MCF 10A (cell line): ENCODE measurements at regions of chr19 and their contacts with region 1.

Region 1: DNA sequence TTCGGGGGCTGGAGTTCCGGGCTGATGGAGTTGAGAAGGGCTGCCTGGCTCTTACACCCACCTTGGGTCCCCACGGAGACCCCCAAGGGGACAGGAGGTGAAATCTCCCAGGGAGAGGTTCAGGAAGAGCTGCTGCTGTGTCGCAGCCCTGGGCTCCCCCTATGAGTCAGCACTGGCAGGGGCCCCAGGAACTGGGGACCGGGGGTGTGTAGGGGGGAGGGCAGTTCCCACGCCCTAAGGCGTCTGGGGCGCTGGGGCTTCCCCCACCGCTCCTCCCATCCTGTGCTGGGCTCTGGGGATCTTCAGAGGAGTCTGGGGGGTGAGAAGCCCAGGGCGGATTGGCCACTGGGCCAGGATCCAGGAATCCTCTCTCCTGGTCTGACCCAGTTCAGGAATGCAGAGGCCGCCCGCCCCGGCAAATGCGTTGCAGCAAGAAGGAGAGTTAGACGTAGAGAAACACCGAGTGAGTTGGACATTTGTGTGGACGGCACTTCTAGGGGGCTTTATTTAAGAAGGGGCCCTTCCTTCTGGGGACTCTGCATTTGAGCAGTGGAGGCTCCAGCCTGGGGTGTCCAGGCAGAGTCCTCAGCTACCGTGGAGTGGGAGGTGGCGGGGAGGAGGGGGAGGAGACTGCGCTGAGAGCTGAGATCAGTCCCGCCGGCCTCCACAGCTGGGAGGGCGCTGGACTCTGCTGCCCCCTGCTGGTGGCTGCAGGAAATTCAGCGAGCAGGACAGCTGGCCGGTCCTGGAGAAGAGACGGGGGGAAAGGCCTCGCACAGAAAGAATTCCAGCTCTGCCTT is 15.0 kb upstream of the NANOS3 start:
- DNase-seq: peak; percentile 90
- H3K4me3 Mint-ChIP-seq: peak overlapping the region; percentile 75
- H3K27ac Mint-ChIP-seq: peak overlapping the region; percentile 49
- H3K4me1 Mint-ChIP-seq: peaks cover 22% of the 10 kb centered on the region
- H3K27me3 Mint-ChIP-seq: peaks cover 23% of the 10 kb centered on the region
- CTCF ChIP-seq: peak; percentile 91

Region 2: DNA sequence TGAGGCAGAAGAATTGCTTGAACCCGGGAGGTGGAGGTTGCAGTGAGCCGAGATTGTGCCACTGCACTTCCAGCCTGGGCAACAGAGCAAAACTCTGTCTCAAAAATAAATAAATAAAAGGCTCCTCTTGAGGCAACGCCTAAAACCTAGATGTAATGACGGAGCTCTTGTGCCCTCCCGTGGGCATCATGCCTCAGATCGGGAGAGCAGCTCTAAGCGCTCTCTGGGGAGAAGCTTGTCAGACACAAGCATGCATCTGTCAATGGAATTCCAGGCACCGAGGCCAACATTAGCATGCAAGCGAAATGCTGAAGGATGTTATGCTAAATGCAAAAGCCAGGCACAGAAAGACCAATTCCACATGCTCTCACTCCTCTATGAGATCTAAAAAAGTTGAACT is 143.2 kb before region 1 on chr19:
- CTCF ChIA-PET with region 1: interaction called, 3 read pairs
- POLR2A ChIA-PET with region 1: no interaction called
- intact Hi-C with region 1: loop called (anchors 5 kb)
- DNase-seq: peak; percentile 52
- H3K4me3 Mint-ChIP-seq: no peak overlapping the region
- H3K27ac Mint-ChIP-seq: no peak overlapping the region
- H3K4me1 Mint-ChIP-seq: no peaks in the 10 kb centered on the region
- H3K27me3 Mint-ChIP-seq: no peaks in the 10 kb centered on the region
- CTCF ChIP-seq: peak; percentile 59

Region 3: DNA sequence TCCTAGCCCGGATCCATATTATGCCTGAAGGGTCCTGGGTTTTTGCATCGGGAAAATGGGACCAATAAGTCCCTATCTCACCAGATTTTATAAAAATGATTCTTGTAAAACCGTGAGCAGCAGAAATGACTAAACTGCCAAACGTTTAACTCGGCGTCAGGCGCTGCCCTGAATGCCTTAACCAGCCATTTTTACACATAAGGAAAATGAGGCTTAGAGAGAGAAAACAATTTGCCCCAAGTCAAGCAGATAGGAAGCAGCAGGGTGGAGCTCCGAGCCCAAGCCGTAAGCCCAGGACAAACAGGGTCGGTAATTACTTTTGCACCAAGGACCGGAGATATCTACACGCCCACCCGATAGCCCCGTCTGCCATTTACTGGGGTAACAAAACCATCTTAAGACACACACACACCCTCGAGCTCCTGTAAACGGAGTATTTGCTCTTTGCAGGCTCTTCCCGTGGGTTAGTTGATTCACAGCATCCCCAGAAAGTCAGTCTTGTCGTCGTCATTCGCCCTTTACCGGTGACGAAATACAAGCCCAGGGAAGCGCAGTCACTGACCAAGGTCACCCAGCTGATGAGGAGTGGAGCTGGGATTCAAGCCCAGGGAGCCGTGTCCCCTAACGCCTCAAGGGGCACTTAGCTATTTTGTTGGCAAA is 113.6 kb before region 1 on chr19:
- CTCF ChIA-PET with region 1: no interaction called
- POLR2A ChIA-PET with region 1: interaction called, 11 read pairs
- intact Hi-C with region 1: no loop called
- DNase-seq: peak; percentile 27
- H3K4me3 Mint-ChIP-seq: peak overlapping the region; percentile 89
- H3K27ac Mint-ChIP-seq: peak overlapping the region; percentile 90
- H3K4me1 Mint-ChIP-seq: peaks cover 12% of the 10 kb centered on the region
- H3K27me3 Mint-ChIP-seq: no peaks in the 10 kb centered on the region
- CTCF ChIP-seq: no peak

Region 4: DNA sequence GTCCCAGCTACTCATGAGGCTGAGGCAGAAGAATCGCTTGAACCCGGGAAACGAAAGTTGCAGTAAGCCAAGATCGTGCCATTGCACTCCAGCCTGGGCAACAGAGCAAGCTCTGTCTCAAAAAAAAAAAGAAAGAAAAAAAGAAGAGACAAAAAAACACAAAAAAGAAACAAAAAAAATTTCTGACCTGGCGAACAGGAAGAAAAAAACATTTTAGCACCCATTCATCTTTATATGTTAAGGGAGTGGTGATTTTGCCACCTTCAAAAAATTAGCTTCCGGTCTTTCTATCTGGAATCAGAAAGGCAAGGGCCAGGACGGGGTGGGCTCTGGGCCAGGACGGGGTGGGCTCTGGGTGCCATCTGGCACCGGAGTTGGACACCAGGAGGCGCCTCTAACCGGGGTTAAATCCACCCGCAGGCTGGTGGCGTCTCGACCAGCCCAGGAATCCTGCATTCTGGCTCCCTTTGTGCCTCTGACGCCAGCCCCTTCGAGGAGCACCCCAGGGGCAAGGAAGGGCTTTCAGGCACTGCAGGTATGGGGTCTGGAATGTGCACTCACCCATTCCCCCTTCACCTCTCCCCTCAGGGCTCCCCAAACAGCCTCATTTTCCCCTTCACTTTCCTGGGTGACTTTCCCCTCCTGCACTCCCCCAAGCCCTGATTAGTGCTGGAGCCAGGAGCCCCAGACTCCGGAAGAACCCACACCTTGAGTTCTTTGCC is 77.0 kb before region 1 on chr19:
- CTCF ChIA-PET with region 1: interaction called, 107 read pairs
- POLR2A ChIA-PET with region 1: interaction called, 14 read pairs
- intact Hi-C with region 1: loop called (anchors 1 kb)
- DNase-seq: peak; percentile 78
- H3K4me3 Mint-ChIP-seq: no peak overlapping the region
- H3K27ac Mint-ChIP-seq: no peak overlapping the region
- H3K4me1 Mint-ChIP-seq: peaks cover 14% of the 10 kb centered on the region
- H3K27me3 Mint-ChIP-seq: no peaks in the 10 kb centered on the region
- CTCF ChIP-seq: peak; percentile 77

Region 5: GRCh38 chr19:13819238-13819637 is 42.7 kb before region 1 on chr19:
- CTCF ChIA-PET with region 1: interaction called, 11 read pairs
- POLR2A ChIA-PET with region 1: interaction called, 7 read pairs
- intact Hi-C with region 1: no loop called
- DNase-seq: no peak
- H3K4me3 Mint-ChIP-seq: no peak overlapping the region
- H3K27ac Mint-ChIP-seq: no peak overlapping the region
- H3K4me1 Mint-ChIP-seq: peaks cover 17% of the 10 kb centered on the region
- H3K27me3 Mint-ChIP-seq: no peaks in the 10 kb centered on the region
- CTCF ChIP-seq: no peak

Region 6: DNA sequence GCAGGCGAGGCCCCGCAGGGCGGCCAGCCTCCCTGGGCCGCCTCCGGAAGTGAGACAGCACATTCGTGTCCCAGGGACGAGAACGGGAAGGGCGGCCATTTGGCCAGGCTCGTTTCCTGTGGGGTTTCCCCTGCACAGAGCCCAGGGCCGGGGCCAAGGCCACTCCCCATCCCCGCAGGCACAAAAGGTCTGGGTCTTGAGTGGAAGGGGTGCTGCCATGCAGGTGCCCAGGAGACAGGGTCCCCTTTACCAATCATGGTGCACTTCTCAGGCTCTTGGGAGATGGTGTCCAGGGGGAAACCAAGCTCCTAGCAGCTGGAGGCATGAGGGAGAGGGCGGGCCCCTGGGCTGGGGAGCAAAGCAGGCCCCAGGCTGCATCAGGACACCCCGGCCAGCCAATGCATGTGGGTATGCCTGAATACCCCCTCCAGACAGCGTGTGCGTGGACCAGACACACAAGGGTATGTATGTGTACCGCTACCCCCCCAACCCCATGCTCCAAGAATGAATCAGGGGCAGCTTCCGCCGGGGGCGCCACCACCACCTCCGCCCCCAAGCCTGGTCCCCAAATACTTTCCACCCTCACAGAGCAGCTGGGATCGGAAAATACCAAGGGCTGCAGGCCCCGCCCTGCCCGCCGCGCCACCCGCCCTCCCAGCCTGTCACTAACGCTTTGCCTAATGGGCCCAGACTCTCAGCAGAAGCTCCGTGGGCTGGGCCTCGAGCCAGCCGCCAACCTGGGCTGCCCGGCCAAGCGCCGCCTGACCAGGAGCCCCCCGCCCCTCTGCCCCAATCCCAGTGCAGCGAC is 22.6 kb before region 1 on chr19:
- CTCF ChIA-PET with region 1: interaction called, 19 read pairs
- POLR2A ChIA-PET with region 1: interaction called, 265 read pairs
- intact Hi-C with region 1: loop called (anchors 1 kb)
- DNase-seq: peak; percentile 94
- H3K4me3 Mint-ChIP-seq: peak overlapping the region; percentile 96
- H3K27ac Mint-ChIP-seq: peak overlapping the region; percentile 95
- H3K4me1 Mint-ChIP-seq: peaks cover 16% of the 10 kb centered on the region
- H3K27me3 Mint-ChIP-seq: no peaks in the 10 kb centered on the region
- CTCF ChIP-seq: no peak

Region 7: GRCh38 chr19:13880059-13881043 is 18.4 kb after region 1 on chr19:
- CTCF ChIA-PET with region 1: interaction called, 10 read pairs
- POLR2A ChIA-PET with region 1: interaction called, 4 read pairs
- intact Hi-C with region 1: no loop called
- DNase-seq: peak; percentile 97
- H3K4me3 Mint-ChIP-seq: peak overlapping the region; percentile 38
- H3K27ac Mint-ChIP-seq: peak overlapping the region; percentile 63
- H3K4me1 Mint-ChIP-seq: no peaks in the 10 kb centered on the region
- H3K27me3 Mint-ChIP-seq: no peaks in the 10 kb centered on the region
- CTCF ChIP-seq: peak; percentile 98